HepG2 (cell line): ENCODE measurements at regions of chr17 and their contacts with region 1.

Region 1: DNA sequence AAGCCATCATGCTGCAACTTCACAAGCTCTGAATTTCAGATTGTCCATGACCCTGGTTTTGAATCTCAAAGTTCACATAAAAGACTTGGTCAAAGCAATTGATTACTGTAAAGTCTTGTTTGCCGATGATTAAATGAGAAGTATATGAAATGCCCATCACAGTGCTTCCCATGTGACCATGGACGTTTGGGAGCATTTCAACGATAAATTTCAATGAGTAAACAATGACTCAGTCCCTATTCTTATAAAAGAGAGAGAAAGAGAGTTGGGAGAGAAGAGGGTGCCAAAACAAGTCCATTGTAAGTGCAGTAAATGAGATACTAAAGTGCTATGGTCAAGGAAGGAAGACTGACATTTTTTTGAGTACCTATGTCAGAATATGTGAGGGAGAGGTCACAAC is 276.9 kb downstream of the SOX9 start:
- DNase-seq: no peak
- ATAC-seq: no peak
- H3K4me3 ChIP-seq: no peak overlapping the region
- H3K27ac ChIP-seq: peak overlapping the region; percentile 41
- H3K4me1 ChIP-seq: peaks cover 98% of the 10 kb centered on the region
- H3K27me3 ChIP-seq: no peaks in the 10 kb centered on the region
- CTCF ChIP-seq: no peak
- EP300 ChIP-seq: no peak
- POLR2A ChIP-seq: no peak
- RAD21 ChIP-seq: no peak

Region 2: DNA sequence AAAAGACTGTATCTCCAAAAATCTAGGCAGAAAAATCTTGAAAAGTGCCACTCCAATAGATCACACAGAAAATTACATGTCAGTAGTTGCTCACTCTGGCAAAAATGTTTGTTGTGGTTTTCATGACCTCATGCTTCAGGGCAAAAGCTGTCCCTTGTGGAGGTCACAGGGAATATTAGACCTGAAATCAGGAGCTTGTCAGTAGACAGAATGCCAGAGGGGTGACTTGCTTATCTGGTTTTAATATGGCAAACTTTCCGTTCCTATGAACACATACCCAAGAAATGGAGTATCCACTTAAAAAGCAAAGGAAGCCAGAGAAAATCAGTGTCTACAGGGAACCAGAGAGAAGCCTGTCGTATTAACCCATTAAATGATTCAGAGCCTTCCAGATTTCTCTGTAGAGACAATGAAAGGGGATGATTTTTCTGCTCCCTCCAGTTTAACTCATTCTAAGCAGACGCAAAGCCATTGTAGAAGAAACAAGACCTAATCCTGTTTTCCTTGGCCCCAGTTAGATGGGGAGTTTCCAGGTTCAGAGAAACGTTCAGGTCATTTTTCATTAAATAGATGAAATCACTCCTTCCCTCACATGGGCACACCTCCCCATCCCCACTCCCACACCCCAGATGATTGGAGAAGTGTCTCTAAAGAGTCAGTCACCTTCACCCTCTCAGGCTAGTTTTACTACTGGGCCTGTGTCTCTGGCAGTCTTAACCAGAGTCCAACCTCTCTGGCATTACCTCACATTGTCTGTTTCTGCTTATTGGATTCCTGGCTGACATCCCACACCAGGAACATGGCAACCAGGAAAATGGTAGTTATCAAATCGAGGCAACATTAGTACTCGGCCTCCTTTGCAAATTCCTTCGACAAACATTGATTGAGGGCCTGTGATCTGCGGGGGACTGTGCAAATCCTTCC is 270.9 kb before region 1 on chr17:
- CTCF ChIA-PET with region 1: no interaction called
- POLR2A ChIA-PET with region 1: interaction called, 96 read pairs
- in situ Hi-C with region 1: loop called (anchors 5 kb)
- intact Hi-C with region 1: loop called (anchors 1 kb)
- DNase-seq: peak; percentile 95
- ATAC-seq: peak; percentile 64
- H3K4me3 ChIP-seq: no peak overlapping the region
- H3K27ac ChIP-seq: peak overlapping the region; percentile 36
- H3K4me1 ChIP-seq: peaks cover 46% of the 10 kb centered on the region
- H3K27me3 ChIP-seq: no peaks in the 10 kb centered on the region; a peak in 1 of 5 replicates
- CTCF ChIP-seq: 0 out of 2 replicates have a peak, but pooled peaks have one; percentile 12
- EP300 ChIP-seq: peak in 1 of 2 experiments; percentile 71; a peak in 1 of 4 replicates
- POLR2A ChIP-seq: peak; percentile 13 to 50; a peak in 2 of 4 replicates
- RAD21 ChIP-seq: no peak

Region 3: GRCh38 chr17:72297326-72298115 is 100.2 kb before region 1 on chr17:
- CTCF ChIA-PET with region 1: no interaction called
- POLR2A ChIA-PET with region 1: interaction called, 3 read pairs
- in situ Hi-C with region 1: no loop called
- intact Hi-C with region 1: loop called (anchors 5 kb)
- DNase-seq: no peak
- ATAC-seq: peak; percentile 56
- H3K4me3 ChIP-seq: no peak overlapping the region
- H3K27ac ChIP-seq: no peak overlapping the region
- H3K4me1 ChIP-seq: peaks cover 55% of the 10 kb centered on the region
- H3K27me3 ChIP-seq: peaks cover 1 to 7% of the 10 kb centered on the region in 2 experiments; a peak in 2 of 5 replicates
- CTCF ChIP-seq: no peak
- EP300 ChIP-seq: no peak
- POLR2A ChIP-seq: no peak
- RAD21 ChIP-seq: no peak

Region 4: GRCh38 chr17:72416054-72416675 is 18.5 kb after region 1 on chr17:
- CTCF ChIA-PET with region 1: interaction called, 4 read pairs
- POLR2A ChIA-PET with region 1: interaction called, 169 read pairs
- in situ Hi-C with region 1: no loop called
- intact Hi-C with region 1: loop called (anchors 1 kb)
- DNase-seq: no peak
- ATAC-seq: no peak
- H3K4me3 ChIP-seq: no peak overlapping the region
- H3K27ac ChIP-seq: peak overlapping the region; percentile 89
- H3K4me1 ChIP-seq: peaks cover 89% of the 10 kb centered on the region
- H3K27me3 ChIP-seq: no peaks in the 10 kb centered on the region
- CTCF ChIP-seq: no peak
- EP300 ChIP-seq: no peak; a peak in 1 of 4 replicates
- POLR2A ChIP-seq: no peak
- RAD21 ChIP-seq: no peak

Region 5: GRCh38 chr17:72430611-72431432 is 33.1 kb after region 1 on chr17:
- CTCF ChIA-PET with region 1: no interaction called
- POLR2A ChIA-PET with region 1: interaction called, 11 read pairs
- in situ Hi-C with region 1: no loop called
- intact Hi-C with region 1: no loop called
- DNase-seq: no peak
- ATAC-seq: peak; percentile 20; the same call in 2 of the 3 replicates
- H3K4me3 ChIP-seq: no peak overlapping the region
- H3K27ac ChIP-seq: no peak overlapping the region
- H3K4me1 ChIP-seq: peaks cover 96% of the 10 kb centered on the region
- H3K27me3 ChIP-seq: no peaks in the 10 kb centered on the region
- CTCF ChIP-seq: peak; percentile 55
- EP300 ChIP-seq: no peak
- POLR2A ChIP-seq: no peak
- RAD21 ChIP-seq: no peak; the same call in 1 of the 2 replicates

Region 6: DNA sequence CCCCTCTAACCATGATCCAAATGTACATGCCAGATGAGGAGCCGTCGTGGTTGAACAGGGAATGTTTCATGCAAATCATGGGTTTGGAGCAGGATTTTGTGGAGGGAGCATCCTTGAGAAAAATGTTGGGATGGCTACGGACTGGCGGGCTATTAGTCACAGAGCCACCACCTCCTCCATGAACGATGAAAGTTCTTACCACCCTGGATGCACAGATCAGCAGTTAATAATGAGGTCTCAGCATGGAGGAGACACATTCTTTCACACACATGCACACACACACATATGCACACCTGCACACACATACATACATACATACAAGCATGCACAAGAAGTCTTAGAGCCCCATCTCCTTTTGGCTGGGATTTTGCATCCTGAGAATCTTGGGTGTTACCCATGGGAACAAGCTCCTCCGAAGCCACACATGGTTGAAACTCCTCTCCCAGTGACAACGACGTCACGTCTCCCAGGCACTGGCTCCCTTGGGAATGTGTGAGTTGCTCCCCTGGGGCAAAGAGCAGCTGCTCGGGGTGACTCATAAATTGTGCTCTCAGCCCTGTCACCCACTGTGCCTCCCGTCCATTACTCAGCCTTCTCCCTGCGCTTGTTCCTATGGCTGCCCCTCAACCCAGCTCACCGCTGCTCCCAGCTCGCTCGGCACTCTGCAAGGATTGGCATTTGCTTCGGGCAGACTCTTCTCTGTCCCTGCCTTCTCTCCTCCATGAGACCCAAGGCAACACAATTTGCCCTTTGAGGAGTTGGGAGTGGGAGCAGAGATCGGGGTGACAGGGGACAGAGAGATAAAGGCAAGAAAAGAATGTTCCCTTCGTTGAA is 67.7 kb after region 1 on chr17:
- CTCF ChIA-PET with region 1: no interaction called
- POLR2A ChIA-PET with region 1: interaction called, 15 read pairs
- in situ Hi-C with region 1: no loop called
- intact Hi-C with region 1: no loop called
- DNase-seq: peak; percentile 89
- ATAC-seq: peak; percentile 98
- H3K4me3 ChIP-seq: peak overlapping the region; percentile 7 to 64 (median 43); a peak in 5 of 6 replicates
- H3K27ac ChIP-seq: peak overlapping the region; percentile 70
- H3K4me1 ChIP-seq: peaks cover 98% of the 10 kb centered on the region
- H3K27me3 ChIP-seq: no peaks in the 10 kb centered on the region
- CTCF ChIP-seq: no peak
- EP300 ChIP-seq: peak; percentile 41 to 66; a peak in 2 of 4 replicates
- POLR2A ChIP-seq: peak in 1 of 2 experiments; percentile 48; a peak in 1 of 4 replicates
- RAD21 ChIP-seq: peak; percentile 12; the same call in 1 of the 2 replicates

Region 7: DNA sequence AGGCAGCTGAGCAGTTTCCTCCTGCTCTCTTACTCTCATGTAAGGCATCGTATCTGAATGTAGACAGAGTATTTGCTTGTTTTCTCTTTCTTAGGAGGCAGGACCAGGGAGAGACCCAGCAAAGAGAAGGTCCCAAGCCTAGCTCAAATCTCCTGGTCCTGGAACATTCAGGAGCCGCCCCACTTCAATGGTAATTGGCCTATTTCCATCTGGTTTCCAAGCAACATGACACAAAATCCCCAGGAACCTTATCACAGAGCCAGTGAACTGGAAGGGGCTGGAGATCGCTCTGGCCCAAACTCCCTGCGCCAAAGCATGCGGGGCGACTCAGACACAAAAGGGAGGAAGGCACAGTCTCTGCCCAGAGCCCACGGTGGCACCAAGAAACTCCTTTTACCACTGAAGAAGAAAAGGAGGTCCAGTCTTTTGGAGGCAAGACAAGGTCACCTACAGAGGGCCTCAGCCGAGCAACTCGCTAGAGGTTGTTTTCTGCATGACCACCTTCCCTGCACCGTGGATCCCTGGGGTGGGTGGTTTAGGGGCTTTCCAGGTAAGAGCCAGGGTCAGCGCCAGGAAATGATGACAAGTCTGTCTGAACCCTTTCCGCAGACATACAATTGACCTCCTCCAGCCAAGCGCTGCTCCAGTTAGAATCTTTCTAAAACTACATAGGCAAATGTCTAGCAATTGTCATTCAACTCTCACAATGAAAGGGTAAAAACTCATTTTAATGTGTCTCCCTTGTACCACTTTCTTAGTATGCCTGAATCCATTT is 117.8 kb after region 1 on chr17:
- CTCF ChIA-PET with region 1: no interaction called
- POLR2A ChIA-PET with region 1: interaction called, 8 read pairs
- in situ Hi-C with region 1: no loop called
- intact Hi-C with region 1: loop called (anchors 1 kb)
- DNase-seq: no peak
- ATAC-seq: no peak
- H3K4me3 ChIP-seq: no peak overlapping the region
- H3K27ac ChIP-seq: no peak overlapping the region
- H3K4me1 ChIP-seq: peaks cover 87% of the 10 kb centered on the region
- H3K27me3 ChIP-seq: no peaks in the 10 kb centered on the region
- CTCF ChIP-seq: no peak
- EP300 ChIP-seq: no peak
- POLR2A ChIP-seq: no peak
- RAD21 ChIP-seq: no peak